CD8-positive, alpha-beta T cell (primary cell): ENCODE measurements at regions of chr11 and their contacts with region 1.

Region 1: GRCh38 chr11:95193541-95193940 is 37.5 kb downstream of the SESN3 start:
- DNase-seq: no peak
- ATAC-seq: no peak
- H3K4me3 ChIP-seq: no peak overlapping the region
- H3K4me3 Mint-ChIP-seq: no peak overlapping the region
- H3K27ac ChIP-seq: no peak overlapping the region
- H3K27ac Mint-ChIP-seq: no peak overlapping the region
- H3K4me1 ChIP-seq: peaks cover 7% of the 10 kb centered on the region
- H3K4me1 Mint-ChIP-seq: peaks cover 30% of the 10 kb centered on the region
- H3K27me3 ChIP-seq: no peaks in the 10 kb centered on the region
- H3K27me3 Mint-ChIP-seq: no peaks in the 10 kb centered on the region
- CTCF ChIP-seq: no peak

Region 2: DNA sequence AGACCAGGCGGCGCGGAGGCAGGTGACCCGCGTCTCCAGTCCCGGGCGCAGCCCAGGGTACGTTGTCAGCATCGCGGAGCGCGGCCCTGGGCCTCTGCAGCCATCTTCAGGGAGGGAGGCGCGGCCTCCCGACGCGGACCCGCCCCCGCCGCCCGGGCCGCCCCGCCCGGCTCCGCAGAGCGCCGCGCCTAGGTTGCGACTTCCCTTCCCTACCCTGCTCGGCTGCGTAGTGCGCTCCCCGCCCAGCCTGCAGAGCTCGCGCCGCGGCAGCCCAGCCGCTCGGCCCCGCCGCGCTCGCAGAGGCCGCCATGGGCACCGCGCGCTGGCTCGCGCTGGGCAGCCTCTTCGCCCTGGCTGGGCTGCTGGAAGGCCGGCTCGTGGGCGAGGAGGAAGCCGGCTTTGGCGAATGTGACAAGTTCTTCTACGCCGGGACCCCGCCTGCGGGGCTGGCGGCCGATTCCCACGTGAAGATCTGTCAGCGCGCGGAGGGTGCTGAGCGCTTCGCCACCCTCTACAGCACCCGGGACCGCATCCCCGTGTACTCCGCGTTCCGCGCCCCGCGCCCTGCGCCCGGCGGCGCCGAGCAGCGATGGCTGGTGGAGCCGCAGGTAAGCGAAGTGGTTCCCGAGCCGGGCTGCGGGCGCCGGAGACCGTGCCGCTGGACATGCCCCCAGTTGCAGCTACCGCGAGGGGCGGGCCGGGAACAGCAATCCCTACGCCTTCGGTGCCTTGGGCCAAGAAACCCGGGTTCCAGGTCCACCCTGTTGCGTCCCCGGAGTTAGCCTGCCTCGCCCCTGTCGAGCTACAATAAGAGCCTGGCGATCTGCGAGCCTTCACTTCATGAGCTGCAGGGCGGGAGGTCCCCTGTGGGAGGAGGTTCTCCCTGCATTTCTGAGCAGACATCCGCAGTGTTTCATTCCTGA is 103.7 kb before region 1 on chr11 and contains the start of gene ENDOD1:
- CTCF ChIA-PET with region 1: no interaction called
- POLR2A ChIA-PET with region 1: no interaction called
- intact Hi-C with region 1: no loop called
- DNase-seq: peak; percentile 75 to 92 (median 83)
- ATAC-seq: peak; percentile 94
- H3K4me3 ChIP-seq: peak within 1 kb of the TSS; percentile 66 to 78
- H3K4me3 Mint-ChIP-seq: peak within 1 kb of the TSS; percentile 93
- H3K27ac ChIP-seq: peak within 1 kb of the TSS; percentile 77 to 84
- H3K27ac Mint-ChIP-seq: peak within 1 kb of the TSS; percentile 99
- H3K4me1 ChIP-seq: peaks cover 25% of the 10 kb centered on the region
- H3K4me1 Mint-ChIP-seq: peaks cover 50% of the 10 kb centered on the region
- H3K27me3 ChIP-seq: no peaks in the 10 kb centered on the region
- H3K27me3 Mint-ChIP-seq: no peaks in the 10 kb centered on the region
- CTCF ChIP-seq: no peak
- total RNA-seq, gene ENDOD1: 5.6 to 5.9 TPM

Region 3: DNA sequence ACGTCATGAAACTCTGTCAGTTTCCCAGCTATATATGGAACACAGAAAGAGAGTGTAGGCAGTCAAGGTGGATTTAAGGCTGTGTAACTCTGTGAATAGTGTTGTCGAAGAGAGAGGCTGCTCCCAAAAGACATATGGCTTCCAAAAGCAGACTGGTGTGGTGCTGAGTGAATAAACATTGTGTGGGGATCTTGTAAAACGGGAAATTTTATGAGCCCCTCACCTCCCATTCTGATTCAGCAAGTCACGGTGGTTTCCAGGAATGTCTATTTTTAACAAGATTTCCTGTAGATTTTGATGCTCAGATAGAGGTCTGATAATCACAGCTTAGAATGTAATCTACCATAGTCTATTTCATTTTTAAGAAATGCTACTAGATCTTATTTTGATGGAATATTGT is 30.4 kb before region 1 on chr11:
- CTCF ChIA-PET with region 1: interaction called, 4 read pairs
- POLR2A ChIA-PET with region 1: no interaction called
- intact Hi-C with region 1: loop called in 1 of 2 experiments (anchors 2 kb)
- DNase-seq: no peak
- ATAC-seq: no peak
- H3K4me3 ChIP-seq: no peak overlapping the region
- H3K4me3 Mint-ChIP-seq: no peak overlapping the region
- H3K27ac ChIP-seq: no peak overlapping the region
- H3K27ac Mint-ChIP-seq: peak overlapping the region; percentile 41
- H3K4me1 ChIP-seq: peaks cover 2% of the 10 kb centered on the region
- H3K4me1 Mint-ChIP-seq: peaks cover 15% of the 10 kb centered on the region
- H3K27me3 ChIP-seq: no peaks in the 10 kb centered on the region
- H3K27me3 Mint-ChIP-seq: no peaks in the 10 kb centered on the region
- CTCF ChIP-seq: no peak